Common myeloid progenitor, CD34-positive (primary cell): ENCODE measurements at regions of chr18 and their contacts with region 1.

Region 1: DNA sequence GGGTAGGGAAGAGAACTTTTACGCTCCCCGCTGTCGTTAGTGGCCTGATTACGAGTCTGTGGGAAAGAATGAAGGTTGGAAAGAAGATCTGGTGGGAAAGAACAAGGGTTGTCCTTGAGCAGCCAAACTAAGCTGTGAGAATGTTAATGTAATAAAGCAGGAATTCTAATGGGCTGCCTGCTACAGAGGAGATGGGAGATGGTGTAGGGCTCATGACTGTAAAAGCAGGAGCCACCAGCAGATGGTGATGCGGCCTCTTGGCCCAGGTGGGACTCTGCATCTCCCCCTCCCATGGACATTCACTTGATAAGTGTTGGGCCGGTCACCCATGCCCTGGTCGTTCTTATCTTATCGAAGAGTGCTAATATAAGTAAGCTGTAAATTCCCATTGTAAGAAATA is 150.0 kb downstream of the NEDD4L start:
- DNase-seq: no peak
- H3K4me3 ChIP-seq: no peak overlapping the region
- H3K27ac ChIP-seq: no peak overlapping the region
- H3K4me1 ChIP-seq: peaks cover 3 to 10% (median 7%) of the 10 kb centered on the region in 4 experiments
- H3K27me3 ChIP-seq: peaks cover 0 to 8% (median 2%) of the 10 kb centered on the region in 5 experiments

Region 2: GRCh38 chr18:58101291-58101794 is 92.7 kb before region 1 on chr18:
- CTCF ChIA-PET with region 1: no interaction called
- POLR2A ChIA-PET with region 1: no interaction called
- DNase-seq: no peak
- H3K4me3 ChIP-seq: no peak overlapping the region
- H3K27ac ChIP-seq: no peak overlapping the region
- H3K4me1 ChIP-seq: peaks cover 0 to 16% (median 14%) of the 10 kb centered on the region in 4 experiments
- H3K27me3 ChIP-seq: peaks cover 0 to 4% (median 2%) of the 10 kb centered on the region in 5 experiments

Region 3: DNA sequence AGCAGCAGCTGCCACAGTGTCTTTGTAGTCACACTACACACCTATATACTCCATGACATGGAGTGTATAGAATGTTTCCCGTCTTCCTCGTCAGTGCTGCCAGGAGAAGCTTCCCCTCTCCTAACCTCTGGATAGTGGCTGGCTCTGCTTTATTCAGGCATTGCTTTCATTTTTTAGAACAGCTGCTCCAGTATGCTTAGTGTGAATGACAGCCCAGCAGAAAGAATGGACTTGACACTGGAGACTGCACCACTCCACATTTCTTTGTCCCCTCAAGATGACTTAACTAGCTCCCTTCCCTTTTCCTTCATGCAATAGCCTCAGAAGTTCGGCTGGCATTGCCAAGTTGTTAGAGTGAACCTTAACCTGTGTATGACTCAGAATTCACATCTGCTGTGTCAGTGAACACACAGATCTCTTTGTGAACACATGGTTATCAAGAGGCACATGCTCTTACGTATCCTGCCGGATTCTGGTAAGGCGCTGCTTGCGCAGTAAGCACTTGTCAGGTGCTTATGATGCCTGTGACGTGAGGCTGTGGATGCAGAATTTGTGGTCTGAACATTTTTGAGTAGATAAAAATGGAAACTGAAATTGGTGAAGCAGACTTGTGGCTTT is 76.1 kb before region 1 on chr18:
- CTCF ChIA-PET with region 1: no interaction called
- POLR2A ChIA-PET with region 1: no interaction called
- DNase-seq: peak; percentile 92 to 96 (median 93)
- H3K4me3 ChIP-seq: no peak overlapping the region
- H3K27ac ChIP-seq: no peak overlapping the region
- H3K4me1 ChIP-seq: peaks cover 0 to 15% (median 8%) of the 10 kb centered on the region in 4 experiments
- H3K27me3 ChIP-seq: no peaks in the 10 kb centered on the region

Region 4: DNA sequence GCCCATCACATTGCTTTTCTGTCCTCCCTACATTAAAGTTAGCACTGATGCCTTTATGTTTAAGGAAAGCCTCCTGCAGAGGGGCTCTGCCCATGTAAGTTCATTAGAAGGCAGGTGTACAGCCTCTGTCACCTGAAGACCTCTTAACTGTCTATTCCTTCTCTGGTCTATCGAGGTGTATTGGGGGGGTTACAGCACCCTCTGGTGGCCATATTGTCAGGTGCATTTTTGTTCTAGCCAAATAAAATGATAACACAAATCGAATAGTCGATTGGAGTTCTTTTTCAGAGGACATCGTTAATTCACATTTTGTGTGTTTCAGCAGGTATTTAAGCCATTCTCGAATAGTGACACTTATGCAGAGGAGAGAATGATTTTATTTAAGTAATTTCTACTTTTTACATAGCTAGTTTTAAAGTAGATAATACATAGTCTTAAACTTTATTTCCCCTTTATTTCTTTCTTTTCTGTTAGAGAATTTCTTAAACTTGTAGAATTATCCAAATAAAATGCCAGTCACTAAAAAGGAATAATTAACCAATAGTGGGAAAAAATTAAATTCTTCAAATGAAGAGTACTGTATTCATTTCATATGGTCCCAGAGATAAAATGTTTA is 13.2 kb before region 1 on chr18:
- CTCF ChIA-PET with region 1: interaction called, 33 read pairs
- POLR2A ChIA-PET with region 1: no interaction called
- DNase-seq: peak; percentile 50 to 73 (median 62)
- H3K4me3 ChIP-seq: no peak overlapping the region
- H3K27ac ChIP-seq: no peak overlapping the region
- H3K4me1 ChIP-seq: no peaks in the 10 kb centered on the region
- H3K27me3 ChIP-seq: no peaks in the 10 kb centered on the region